ENCODE measurements at regions of chr1 and their contacts with region 1.

Region 1: GRCh38 chr1:225544263-225544662 is 108.7 kb downstream of the ENAH start:
- H3K4me3 ChIP-seq: no peak overlapping the region
- H3K27ac ChIP-seq: no peak overlapping the region
- H3K4me1 ChIP-seq: peaks cover 15% of the 10 kb centered on the region
- CTCF ChIP-seq: no peak

Region 2: DNA sequence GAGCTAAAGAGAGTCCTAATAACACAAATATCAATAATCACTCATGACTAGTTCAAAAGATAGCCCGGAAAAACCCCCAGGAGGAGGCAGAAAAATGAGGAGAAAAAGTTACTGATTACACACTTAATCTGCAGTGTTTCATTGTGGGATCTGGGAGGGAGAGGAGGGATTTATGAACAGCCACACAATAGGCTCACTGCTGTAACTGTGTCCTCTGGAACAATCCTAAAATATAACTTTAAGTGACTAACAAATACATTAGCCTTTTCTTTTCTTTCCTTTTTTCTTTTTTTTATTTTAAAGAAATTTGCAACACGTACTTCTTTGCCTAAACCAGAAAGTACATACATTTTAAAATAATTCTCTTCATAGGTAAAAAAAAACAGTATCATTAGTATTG is 10.1 kb before region 1 on chr1:
- CTCF ChIA-PET with region 1: interaction called, 10 read pairs
- POLR2A ChIA-PET with region 1: no interaction called
- H3K4me3 ChIP-seq: no peak overlapping the region
- H3K27ac ChIP-seq: no peak overlapping the region
- H3K4me1 ChIP-seq: peaks cover 53% of the 10 kb centered on the region
- CTCF ChIP-seq: no peak

Region 3: DNA sequence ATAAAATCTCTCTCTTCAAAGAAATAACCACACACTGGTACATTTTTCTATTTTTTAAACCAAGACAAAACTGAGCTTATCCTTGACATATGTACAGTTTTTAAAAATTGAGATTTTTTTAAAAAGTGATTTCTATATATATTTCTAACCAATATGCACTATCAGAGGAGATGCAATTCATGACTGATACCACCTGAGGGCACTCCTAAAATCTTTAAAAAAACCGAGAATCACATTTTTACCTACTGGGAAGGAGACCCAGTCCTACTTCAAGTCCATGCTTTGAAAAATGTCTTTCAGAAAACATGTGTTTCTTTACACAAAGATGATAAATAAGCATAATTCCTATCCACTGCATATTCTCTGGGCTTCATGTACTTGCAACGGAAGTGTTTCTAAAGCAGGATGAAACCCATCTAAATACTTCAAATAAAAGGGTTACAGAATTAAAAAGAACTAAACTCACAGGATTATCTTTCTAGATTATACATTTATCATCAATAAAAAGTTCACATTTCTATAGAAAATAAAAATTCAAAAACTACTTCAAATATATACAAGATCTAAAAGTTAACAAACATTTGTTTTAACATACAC is 10.1 kb after region 1 on chr1:
- CTCF ChIA-PET with region 1: interaction called, 18 read pairs
- POLR2A ChIA-PET with region 1: interaction called, 4 read pairs
- H3K4me3 ChIP-seq: no peak overlapping the region
- H3K27ac ChIP-seq: no peak overlapping the region
- H3K4me1 ChIP-seq: no peaks in the 10 kb centered on the region
- CTCF ChIP-seq: 0 out of 2 replicates have a peak, but pooled peaks have one; percentile 33

Region 4: GRCh38 chr1:225612287-225612686 is 68.0 kb after region 1 on chr1:
- CTCF ChIA-PET with region 1: no interaction called
- POLR2A ChIA-PET with region 1: no interaction called
- H3K4me3 ChIP-seq: no peak overlapping the region
- H3K27ac ChIP-seq: 0 out of 2 replicates have a peak overlapping the region, but pooled peaks have one; percentile 32
- H3K4me1 ChIP-seq: peaks cover 35% of the 10 kb centered on the region
- CTCF ChIP-seq: no peak

Region 5: DNA sequence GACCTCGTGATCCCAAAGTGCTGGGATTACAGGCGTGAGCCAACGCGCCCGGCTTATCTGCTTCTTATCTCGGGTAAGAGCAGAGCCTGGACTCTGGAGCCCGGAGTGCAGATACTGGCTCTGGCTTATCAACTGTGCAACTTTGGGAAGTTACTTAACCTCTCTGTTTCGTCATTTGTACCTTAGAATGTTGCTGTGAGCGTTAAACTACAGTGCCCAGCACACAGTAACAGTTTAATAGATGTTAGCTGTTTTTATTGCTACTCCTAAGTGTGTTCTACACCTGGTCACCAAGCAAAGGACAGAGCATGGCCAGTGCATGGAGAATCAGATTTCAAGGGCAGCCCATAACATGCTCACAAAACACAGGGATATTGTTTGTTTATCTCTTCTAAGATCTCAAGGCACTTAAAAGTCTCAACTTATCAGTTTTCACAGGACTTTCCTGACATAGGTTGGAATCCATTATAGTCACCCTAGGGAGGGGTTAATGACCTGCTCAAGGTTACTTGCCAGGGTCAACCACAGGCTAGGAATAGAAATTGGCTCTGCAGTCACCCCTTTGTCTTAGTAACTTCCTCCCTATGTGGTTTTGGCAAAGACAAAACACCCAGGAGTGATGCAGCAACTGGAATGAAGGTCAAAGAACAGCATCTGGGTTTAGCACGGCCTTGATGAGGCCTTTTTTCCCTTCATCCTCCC is 210.8 kb after region 1 on chr1:
- CTCF ChIA-PET with region 1: no interaction called
- POLR2A ChIA-PET with region 1: no interaction called
- H3K4me3 ChIP-seq: no peak overlapping the region
- H3K27ac ChIP-seq: no peak overlapping the region
- H3K4me1 ChIP-seq: peaks cover 6% of the 10 kb centered on the region
- CTCF ChIP-seq: no peak